ENCODE measurements at regions of chr17 and their contacts with region 1.

Region 1: DNA sequence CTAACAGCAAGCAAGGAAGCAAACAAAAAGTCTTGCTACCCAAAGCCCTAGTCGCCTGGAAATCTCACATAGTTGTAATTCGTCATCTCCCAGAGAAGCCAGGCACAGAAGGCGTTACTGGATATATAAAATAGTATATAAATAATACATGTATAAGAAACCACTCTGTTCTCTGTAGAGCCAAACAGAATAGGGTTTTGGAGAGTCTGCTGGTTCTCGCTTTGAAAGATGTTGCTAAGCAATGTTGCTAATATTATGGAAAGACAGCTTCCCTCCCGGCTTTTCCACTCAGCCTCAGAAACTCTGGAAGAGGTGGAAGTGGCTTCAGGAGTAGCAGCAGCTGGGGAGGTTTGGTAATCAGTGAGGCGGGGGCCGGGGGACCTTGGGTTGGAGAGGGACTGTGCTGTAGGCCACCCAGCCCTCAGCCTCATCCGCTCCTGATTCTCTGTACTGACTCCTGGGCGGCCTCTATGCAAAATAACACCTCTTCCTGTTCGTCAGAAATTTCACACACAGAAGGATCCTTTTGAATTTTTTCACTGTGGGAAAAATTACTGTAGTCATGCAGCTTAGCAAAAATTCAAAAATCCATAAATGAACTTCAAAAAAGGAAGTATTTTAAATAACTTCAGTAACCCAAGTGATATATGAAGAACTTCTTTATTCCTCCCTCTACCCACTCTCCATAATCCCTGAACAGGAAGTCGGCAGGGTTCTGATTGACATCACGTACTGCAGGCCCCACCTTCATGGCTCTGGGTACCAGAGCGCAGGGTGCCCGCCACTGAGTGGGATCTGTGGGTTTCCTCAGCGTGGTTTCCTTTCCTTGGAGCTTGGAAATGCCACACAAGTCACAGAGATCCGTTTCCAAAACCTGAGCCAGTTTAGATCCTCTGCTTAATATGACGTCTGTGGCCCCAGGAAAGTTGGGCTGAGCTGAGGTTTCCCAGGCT is 51.4 kb downstream of the RAP1GAP2 start:
- DNase-seq: no peak

Region 2: GRCh38 chr17:2786176-2786881 is 61.3 kb before region 1 on chr17:
- CTCF ChIA-PET with region 1: no interaction called
- POLR2A ChIA-PET with region 1: no interaction called
- DNase-seq: peak; percentile 96

Region 3: GRCh38 chr17:2929881-2930533 is 82.3 kb after region 1 on chr17:
- CTCF ChIA-PET with region 1: interaction called, 16 read pairs
- POLR2A ChIA-PET with region 1: no interaction called
- DNase-seq: peak; percentile 74

Measured in HEK293T (cell line).